Adrenal gland (tissue), 19 donors: ENCODE measurements at regions of chr1 and their contacts with region 1.

Region 1: GRCh38 chr1:164922585-164922984 is 363.6 kb downstream of the PBX1 start:
- DNase-seq: no peak
- H3K4me3 ChIP-seq: no peak overlapping the region
- H3K27ac ChIP-seq: no peak overlapping the region
- H3K4me1 ChIP-seq: no peaks in the 10 kb centered on the region
- H3K27me3 ChIP-seq: no peaks in the 10 kb centered on the region
- CTCF ChIP-seq: no peak
- POLR2A ChIP-seq: no peak

Region 2: GRCh38 chr1:164803366-164803765 is 119.2 kb before region 1 on chr1:
- intact Hi-C with region 1: loop called in 1 of 2 experiments (anchors 10 kb)
- DNase-seq: no peak
- H3K4me3 ChIP-seq: no peak overlapping the region
- H3K27ac ChIP-seq: no peak overlapping the region
- H3K4me1 ChIP-seq: peaks cover 11 to 31% of the 10 kb centered on the region in 2 donors
- H3K27me3 ChIP-seq: no peaks in the 10 kb centered on the region
- CTCF ChIP-seq: no peak
- POLR2A ChIP-seq: no peak

Region 3: DNA sequence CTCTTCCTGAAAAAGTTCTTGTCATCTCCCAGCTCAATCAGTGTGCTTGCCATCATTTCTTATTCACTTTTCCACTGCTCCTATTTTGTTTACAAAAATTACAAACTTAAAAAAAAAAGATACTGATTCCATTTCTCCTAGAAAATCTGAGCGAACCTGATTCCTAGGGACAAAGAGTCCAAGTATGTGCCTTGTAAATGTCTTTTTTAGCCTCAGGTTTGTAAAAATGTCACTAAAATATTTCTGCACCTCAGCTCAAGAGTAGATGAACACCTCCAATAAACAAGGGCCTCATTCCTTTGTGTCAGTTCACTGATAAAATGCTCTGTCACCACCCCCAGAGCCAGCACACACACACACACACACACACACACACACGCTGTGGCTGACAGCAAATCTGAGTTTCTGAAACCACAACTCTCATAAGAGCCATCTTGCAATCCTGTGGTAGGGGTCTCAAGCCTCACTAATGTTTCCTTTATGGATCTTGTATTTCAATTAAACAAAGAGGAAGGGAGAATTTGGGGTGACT is 64.4 kb before region 1 on chr1:
- intact Hi-C with region 1: no loop called
- DNase-seq: no peak
- H3K4me3 ChIP-seq: no peak overlapping the region
- H3K27ac ChIP-seq: no peak overlapping the region
- H3K4me1 ChIP-seq: no peaks in the 10 kb centered on the region
- H3K27me3 ChIP-seq: no peaks in the 10 kb centered on the region
- CTCF ChIP-seq: no peak
- POLR2A ChIP-seq: no peak